MCF 10A (cell line): ENCODE measurements at regions of chr13 and their contacts with region 1.

Region 1: DNA sequence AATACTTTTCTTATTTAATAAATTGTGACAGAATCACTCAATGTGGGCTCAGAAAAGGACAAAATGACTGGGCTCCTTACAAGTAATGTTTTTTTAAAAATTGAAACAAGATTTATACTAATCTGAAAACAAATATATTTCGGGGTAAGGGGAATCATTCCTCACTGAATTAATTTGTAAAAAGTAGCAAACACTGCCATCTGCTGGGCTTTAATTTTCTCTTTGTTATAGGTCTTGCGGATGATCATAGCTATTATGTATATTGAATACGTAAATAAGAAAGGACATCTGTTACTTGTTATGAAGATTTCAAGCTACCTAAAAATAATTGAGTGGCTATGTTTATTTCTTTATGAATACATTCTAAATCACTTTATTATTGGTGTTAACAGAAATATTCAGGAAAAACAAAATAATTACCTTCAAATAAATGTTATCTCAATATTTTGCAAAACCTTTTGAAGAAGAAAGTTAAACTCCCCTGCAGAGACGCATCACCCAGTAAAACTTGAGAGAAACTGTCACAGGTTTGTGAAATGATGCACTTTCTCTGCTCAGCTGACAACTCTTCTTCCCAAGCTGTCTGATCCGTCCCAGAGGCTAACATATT is 17.8 kb upstream of the ENOX1 start:
- DNase-seq: peak; percentile 76
- H3K4me3 Mint-ChIP-seq: peak overlapping the region; percentile 67
- H3K27ac Mint-ChIP-seq: peak overlapping the region; percentile 84
- H3K4me1 Mint-ChIP-seq: peaks cover 14% of the 10 kb centered on the region
- H3K27me3 Mint-ChIP-seq: no peaks in the 10 kb centered on the region
- CTCF ChIP-seq: peak; percentile 57

Region 2: DNA sequence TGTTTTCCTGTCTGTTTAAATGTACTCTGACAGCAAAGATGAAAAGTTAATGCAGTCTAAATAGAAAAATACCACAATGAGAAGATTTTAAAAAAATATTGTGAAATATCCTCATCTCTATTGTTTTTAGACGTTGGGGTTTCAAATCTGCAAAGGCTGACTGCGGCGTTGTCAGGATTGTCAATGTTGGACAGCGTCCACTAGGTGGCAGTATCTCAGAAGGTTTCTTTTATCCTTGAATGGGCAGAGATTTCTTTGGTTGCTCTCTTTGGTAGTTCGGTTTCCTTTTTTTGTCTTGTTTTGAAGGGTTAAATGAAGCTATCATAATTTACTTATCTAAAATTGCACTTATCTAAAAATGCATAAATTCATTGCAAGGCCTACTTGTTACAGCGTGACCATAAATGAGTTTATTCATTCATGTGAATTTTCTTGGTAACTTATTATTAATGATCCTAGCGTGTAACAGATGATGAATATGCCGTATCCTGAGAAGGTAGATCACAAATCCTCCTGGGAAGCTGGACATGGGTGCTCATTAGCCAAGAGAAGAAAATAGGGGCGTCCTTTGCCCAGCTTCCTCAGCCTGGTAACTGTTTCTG is 1209.5 kb before region 1 on chr13:
- CTCF ChIA-PET with region 1: interaction called, 11 read pairs
- POLR2A ChIA-PET with region 1: interaction called, 3 read pairs
- intact Hi-C with region 1: loop called (anchors 1 kb)
- DNase-seq: peak; percentile 89
- H3K4me3 Mint-ChIP-seq: no peak overlapping the region
- H3K27ac Mint-ChIP-seq: no peak overlapping the region
- H3K4me1 Mint-ChIP-seq: peaks cover 11% of the 10 kb centered on the region
- H3K27me3 Mint-ChIP-seq: peaks cover 17% of the 10 kb centered on the region
- CTCF ChIP-seq: peak; percentile 74

Region 3: DNA sequence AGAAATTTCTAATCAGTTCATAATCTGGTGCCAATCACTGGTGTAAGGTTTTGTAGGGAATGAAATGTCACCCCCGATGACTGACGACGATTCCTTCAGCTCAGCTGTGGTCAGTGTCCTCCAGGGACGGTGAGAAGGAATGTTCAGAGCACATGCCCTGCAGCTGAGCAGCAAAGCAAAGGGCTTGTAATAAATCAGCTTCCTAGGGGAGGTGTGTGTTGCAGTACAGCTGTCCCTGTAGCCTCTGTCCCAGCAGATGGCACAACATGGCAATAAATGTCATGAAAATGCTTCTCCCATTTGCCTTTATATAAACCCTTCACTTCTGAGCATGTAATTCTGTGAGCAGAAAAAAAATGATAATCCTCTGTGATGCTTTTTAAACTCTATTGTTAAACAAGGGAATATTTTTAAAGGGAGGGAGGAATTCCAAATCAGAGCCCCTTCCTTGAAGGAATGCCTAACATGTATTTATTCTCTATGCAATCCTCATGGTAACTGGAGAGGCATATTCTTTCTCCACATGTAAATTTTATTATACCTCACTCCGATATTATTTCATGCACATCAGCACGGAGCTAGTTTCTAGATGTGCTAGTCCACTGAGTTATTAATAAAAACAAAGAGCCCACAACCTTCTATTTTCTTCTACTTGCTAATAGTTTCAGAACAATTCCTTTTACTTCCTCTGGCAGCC is 920.6 kb before region 1 on chr13:
- CTCF ChIA-PET with region 1: interaction called, 5 read pairs
- POLR2A ChIA-PET with region 1: interaction called, 3 read pairs
- intact Hi-C with region 1: loop called (anchors 1 kb)
- DNase-seq: peak; percentile 62
- H3K4me3 Mint-ChIP-seq: no peak overlapping the region
- H3K27ac Mint-ChIP-seq: no peak overlapping the region
- H3K4me1 Mint-ChIP-seq: peaks cover 22% of the 10 kb centered on the region
- H3K27me3 Mint-ChIP-seq: no peaks in the 10 kb centered on the region
- CTCF ChIP-seq: peak; percentile 46

Region 4: GRCh38 chr13:43132257-43132656 is 672.3 kb before region 1 on chr13:
- CTCF ChIA-PET with region 1: interaction called, 7 read pairs
- POLR2A ChIA-PET with region 1: no interaction called
- intact Hi-C with region 1: loop called (anchors 2 kb)
- DNase-seq: peak; percentile 82
- H3K4me3 Mint-ChIP-seq: no peak overlapping the region
- H3K27ac Mint-ChIP-seq: no peak overlapping the region
- H3K4me1 Mint-ChIP-seq: peaks cover 13% of the 10 kb centered on the region
- H3K27me3 Mint-ChIP-seq: no peaks in the 10 kb centered on the region
- CTCF ChIP-seq: peak; percentile 36

Region 5: DNA sequence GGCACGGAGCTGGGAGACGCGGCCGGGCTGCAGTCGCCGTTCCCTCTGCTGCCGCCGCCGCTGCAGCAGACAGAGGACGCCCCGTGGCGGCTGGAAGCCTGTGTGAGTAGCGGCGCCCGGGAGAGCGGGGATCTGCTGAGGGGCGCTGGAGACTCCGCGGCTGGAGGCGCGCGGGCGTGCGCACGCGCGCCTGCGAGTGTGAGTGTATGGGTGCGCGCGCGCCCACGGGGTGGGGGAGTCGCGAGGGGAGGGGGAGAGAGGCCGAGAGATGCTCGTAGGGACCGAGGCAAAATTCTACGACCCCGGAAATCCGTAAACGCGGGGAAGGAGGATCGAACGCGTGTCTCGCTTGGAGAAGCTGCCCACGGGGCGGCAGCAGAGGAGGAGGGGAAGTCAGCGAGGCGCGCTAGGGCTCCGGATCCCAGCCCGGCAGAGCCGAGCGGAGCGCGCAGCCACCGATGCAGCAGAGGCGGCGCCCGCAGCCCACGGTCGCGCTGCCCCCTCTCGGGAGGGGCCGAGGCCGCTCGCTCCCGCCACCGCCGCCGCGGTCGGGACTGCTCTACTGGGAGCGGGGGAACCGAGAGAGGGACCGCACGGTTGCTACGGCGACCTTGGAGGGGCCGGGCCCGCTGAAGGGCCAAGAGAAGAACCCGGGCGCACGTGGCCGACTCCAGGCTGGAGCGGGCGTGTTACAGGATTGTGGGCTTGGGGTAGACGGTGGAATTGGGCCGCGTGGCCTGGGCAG is 17.6 kb before region 1 on chr13 and contains the start of gene ENOX1:
- CTCF ChIA-PET with region 1: interaction called, 18 read pairs
- POLR2A ChIA-PET with region 1: interaction called, 4 read pairs
- intact Hi-C with region 1: no loop called
- DNase-seq: peak; percentile 60
- H3K4me3 Mint-ChIP-seq: peak within 1 kb of the TSS; percentile 80
- H3K27ac Mint-ChIP-seq: peak within 1 kb of the TSS; percentile 23
- H3K4me1 Mint-ChIP-seq: peaks cover 20% of the 10 kb centered on the region
- H3K27me3 Mint-ChIP-seq: no peaks in the 10 kb centered on the region
- CTCF ChIP-seq: peak; percentile 12
- total RNA-seq, gene ENOX1: 1.5 and 1.8 TPM in 2 replicates